Activated CD4-positive, alpha-beta T cell treated with anti-CD3 and anti-CD28 coated beads for 36 hours (primary cell): ENCODE measurements at regions of chr1 and their contacts with region 1.

Region 1: GRCh38 chr1:198887866-198888265 is 249.0 kb downstream of the PTPRC start:
- DNase-seq: no peak
- ATAC-seq: no peak
- H3K4me3 Mint-ChIP-seq: no peak overlapping the region
- H3K27ac Mint-ChIP-seq: no peak overlapping the region
- H3K4me1 Mint-ChIP-seq: peaks cover 8% of the 10 kb centered on the region
- H3K27me3 Mint-ChIP-seq: no peaks in the 10 kb centered on the region

Region 2: GRCh38 chr1:198187973-198188588 is 699.8 kb before region 1 on chr1:
- CTCF ChIA-PET with region 1: no interaction called
- POLR2A ChIA-PET with region 1: interaction called, 10 read pairs
- intact Hi-C with region 1: no loop called
- DNase-seq: no peak
- ATAC-seq: peak; percentile 75
- H3K4me3 Mint-ChIP-seq: peak overlapping the region; percentile 19
- H3K27ac Mint-ChIP-seq: peak overlapping the region; percentile 62
- H3K4me1 Mint-ChIP-seq: peaks cover 79% of the 10 kb centered on the region
- H3K27me3 Mint-ChIP-seq: no peaks in the 10 kb centered on the region

Region 3: DNA sequence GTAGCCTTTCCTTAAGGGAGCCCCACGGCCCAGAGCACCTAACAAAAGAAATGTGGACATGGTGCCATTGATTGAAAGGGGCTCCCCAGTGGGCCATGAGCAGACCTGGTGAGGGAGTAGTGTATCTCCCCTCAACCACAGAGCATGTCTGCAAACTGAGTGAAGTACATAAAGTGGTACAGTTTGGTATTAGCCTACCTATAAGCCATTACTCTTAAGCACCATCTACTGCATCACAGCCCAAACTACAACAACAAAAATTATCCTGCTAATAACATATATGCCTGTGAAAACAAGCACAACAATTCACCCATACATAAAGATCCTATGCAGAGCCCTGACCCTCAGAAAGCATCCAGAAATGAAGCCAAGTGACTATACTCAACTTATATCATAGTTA is 158.8 kb after region 1 on chr1:
- CTCF ChIA-PET with region 1: no interaction called
- POLR2A ChIA-PET with region 1: no interaction called
- intact Hi-C with region 1: no loop called
- DNase-seq: no peak
- ATAC-seq: no peak
- H3K4me3 Mint-ChIP-seq: no peak overlapping the region
- H3K27ac Mint-ChIP-seq: no peak overlapping the region
- H3K4me1 Mint-ChIP-seq: peaks cover 5% of the 10 kb centered on the region
- H3K27me3 Mint-ChIP-seq: no peaks in the 10 kb centered on the region